ENCODE measurements at regions of chr14 and their contacts with region 1.

Region 1: DNA sequence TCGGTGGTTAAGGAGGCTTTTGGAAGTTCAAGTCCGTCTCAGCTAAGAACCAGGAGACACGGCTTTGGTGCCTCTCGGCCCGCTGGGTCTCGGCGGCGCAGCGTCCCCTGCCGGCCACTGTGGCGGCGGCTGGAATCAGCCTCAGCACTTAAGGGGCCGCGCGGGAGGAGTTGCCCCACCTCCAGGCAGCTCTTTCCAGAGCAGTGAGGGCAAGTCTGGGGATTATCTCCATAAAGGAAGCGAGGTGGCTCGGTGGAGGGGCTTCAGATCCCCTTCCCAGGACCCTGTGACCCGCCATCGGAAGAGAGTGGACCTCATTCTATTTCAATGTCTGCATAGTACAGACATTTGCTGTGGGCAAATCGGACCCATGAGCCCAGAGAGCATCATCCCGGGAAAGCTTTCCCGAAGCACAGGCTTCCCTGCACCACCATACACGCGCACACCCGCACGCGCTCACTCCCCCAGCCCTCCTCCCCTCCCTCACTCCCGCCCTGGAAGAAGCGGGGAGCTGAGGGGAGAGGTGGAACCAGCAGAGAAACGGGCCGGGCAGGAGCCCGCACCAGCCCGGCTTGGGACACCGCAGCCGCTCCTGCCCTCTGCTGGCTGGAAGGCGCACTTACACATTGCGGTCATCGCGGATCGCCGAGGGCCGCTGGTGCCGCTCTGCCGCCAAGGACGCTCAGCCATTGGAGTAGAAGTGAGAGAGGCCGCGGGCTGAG is 15.9 kb downstream of the RNASE2 start:
- DNase-seq: peak; percentile 86
- H3K4me3 ChIP-seq: peak overlapping the region; percentile 15 to 64 (median 55)
- H3K27ac ChIP-seq: peak overlapping the region; percentile 8
- H3K4me1 ChIP-seq: peaks cover 21% of the 10 kb centered on the region
- H3K27me3 ChIP-seq: peaks cover 8 to 14% of the 10 kb centered on the region in 2 experiments
- CTCF ChIP-seq: peak; percentile 98 to 99
- POLR2A ChIP-seq: no peak

Region 2: DNA sequence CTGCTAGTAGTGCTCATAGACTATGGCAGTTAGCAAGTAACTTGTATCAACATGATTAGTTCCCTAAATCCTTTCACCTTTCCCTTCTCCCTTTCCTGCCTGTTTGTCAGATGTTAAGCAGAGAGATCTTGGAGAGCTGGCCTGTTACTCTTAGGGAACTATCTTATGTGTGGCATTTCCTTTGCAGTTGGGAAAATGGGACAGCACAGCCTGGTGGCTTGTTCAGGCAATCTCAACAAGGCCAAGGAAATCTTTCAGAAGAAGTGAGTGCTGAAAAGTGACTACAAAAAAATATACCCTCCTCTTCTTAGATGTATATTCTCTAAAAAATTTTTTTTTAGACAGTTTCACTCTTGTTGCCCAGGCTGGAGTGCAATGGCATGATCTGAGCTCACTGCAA is 620.3 kb before region 1 on chr14:
- CTCF ChIA-PET with region 1: no interaction called
- POLR2A ChIA-PET with region 1: no interaction called
- dilution Hi-C with region 1: no loop called
- intact Hi-C with region 1: no loop called
- DNase-seq: peak; percentile 15
- H3K4me3 ChIP-seq: no peak overlapping the region
- H3K27ac ChIP-seq: no peak overlapping the region
- H3K4me1 ChIP-seq: peaks cover 12% of the 10 kb centered on the region
- H3K27me3 ChIP-seq: no peaks in the 10 kb centered on the region
- CTCF ChIP-seq: peak; percentile 15 to 22
- POLR2A ChIP-seq: no peak

Region 3: GRCh38 chr14:20613094-20614037 is 357.8 kb before region 1 on chr14:
- CTCF ChIA-PET with region 1: no interaction called
- POLR2A ChIA-PET with region 1: no interaction called
- dilution Hi-C with region 1: no loop called
- intact Hi-C with region 1: loop called (anchors 5 kb)
- DNase-seq: peak; percentile 97
- H3K4me3 ChIP-seq: peak overlapping the region; percentile 48 to 86 (median 70)
- H3K27ac ChIP-seq: peak overlapping the region; percentile 27
- H3K4me1 ChIP-seq: peaks cover 11% of the 10 kb centered on the region
- H3K27me3 ChIP-seq: peaks cover 3 to 6% of the 10 kb centered on the region in 2 experiments
- CTCF ChIP-seq: peak; percentile 55 to 65
- POLR2A ChIP-seq: no peak

Region 4: GRCh38 chr14:20697273-20698017 is 273.7 kb before region 1 on chr14:
- CTCF ChIA-PET with region 1: interaction called, 14 read pairs
- POLR2A ChIA-PET with region 1: no interaction called
- dilution Hi-C with region 1: no loop called
- intact Hi-C with region 1: loop called (anchors 2 kb)
- DNase-seq: peak; percentile 89
- H3K4me3 ChIP-seq: no peak overlapping the region
- H3K27ac ChIP-seq: peak overlapping the region; percentile 30
- H3K4me1 ChIP-seq: peaks cover 11% of the 10 kb centered on the region
- H3K27me3 ChIP-seq: no peaks in the 10 kb centered on the region
- CTCF ChIP-seq: peak; percentile 73 to 90
- POLR2A ChIP-seq: no peak

Region 5: DNA sequence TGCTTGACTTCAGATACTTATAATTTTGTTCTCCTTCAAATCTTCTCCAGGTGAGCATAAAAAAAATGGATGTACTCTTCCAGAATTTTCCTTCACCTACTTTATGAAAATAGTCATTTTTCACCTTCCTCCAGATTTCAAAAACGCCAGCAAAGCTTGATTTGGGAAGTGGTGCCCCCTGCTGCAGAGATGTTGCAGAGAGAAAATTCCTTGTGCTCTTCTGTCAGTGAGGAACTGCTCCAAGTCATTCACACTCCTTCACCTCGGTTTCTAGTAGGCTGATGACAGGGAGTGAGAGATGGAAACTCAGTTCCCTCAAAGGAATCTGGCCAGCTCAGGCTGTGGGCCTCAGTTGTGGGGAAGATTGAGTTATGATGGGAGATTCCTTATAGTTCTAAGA is 104.2 kb before region 1 on chr14:
- CTCF ChIA-PET with region 1: interaction called, 17 read pairs
- POLR2A ChIA-PET with region 1: no interaction called
- dilution Hi-C with region 1: no loop called
- intact Hi-C with region 1: loop called (anchors 2 kb)
- DNase-seq: peak; percentile 24
- H3K4me3 ChIP-seq: no peak overlapping the region
- H3K27ac ChIP-seq: no peak overlapping the region
- H3K4me1 ChIP-seq: no peaks in the 10 kb centered on the region
- H3K27me3 ChIP-seq: peaks cover 7 to 22% of the 10 kb centered on the region in 2 experiments
- CTCF ChIP-seq: peak; percentile 31 to 51
- POLR2A ChIP-seq: no peak

Region 6: GRCh38 chr14:20956376-20956976 is 14.7 kb before region 1 on chr14:
- CTCF ChIA-PET with region 1: interaction called, 48 read pairs
- POLR2A ChIA-PET with region 1: no interaction called
- dilution Hi-C with region 1: no loop called
- intact Hi-C with region 1: no loop called
- DNase-seq: no peak
- H3K4me3 ChIP-seq: no peak overlapping the region
- H3K27ac ChIP-seq: no peak overlapping the region
- H3K4me1 ChIP-seq: no peaks in the 10 kb centered on the region
- H3K27me3 ChIP-seq: peaks cover 2 to 5% of the 10 kb centered on the region in 2 experiments
- CTCF ChIP-seq: no peak
- POLR2A ChIP-seq: no peak

Region 7: GRCh38 chr14:20989572-20990551 is 18.7 kb after region 1 on chr14 and contains the start of gene METTL17:
- CTCF ChIA-PET with region 1: interaction called, 34 read pairs
- POLR2A ChIA-PET with region 1: no interaction called
- dilution Hi-C with region 1: no loop called
- intact Hi-C with region 1: loop called (anchors 2 kb)
- DNase-seq: peak; percentile 94
- H3K4me3 ChIP-seq: peak within 1 kb of the TSS; percentile 73 to 97 (median 96)
- H3K27ac ChIP-seq: peak within 1 kb of the TSS; percentile 58
- H3K4me1 ChIP-seq: peaks cover 21% of the 10 kb centered on the region
- H3K27me3 ChIP-seq: no peaks in the 10 kb centered on the region
- CTCF ChIP-seq: peak; percentile 29 to 40
- POLR2A ChIP-seq: peak; percentile 54
- total RNA-seq, gene METTL17: 50.2 and 60.6 TPM in 2 replicates

Region 8: DNA sequence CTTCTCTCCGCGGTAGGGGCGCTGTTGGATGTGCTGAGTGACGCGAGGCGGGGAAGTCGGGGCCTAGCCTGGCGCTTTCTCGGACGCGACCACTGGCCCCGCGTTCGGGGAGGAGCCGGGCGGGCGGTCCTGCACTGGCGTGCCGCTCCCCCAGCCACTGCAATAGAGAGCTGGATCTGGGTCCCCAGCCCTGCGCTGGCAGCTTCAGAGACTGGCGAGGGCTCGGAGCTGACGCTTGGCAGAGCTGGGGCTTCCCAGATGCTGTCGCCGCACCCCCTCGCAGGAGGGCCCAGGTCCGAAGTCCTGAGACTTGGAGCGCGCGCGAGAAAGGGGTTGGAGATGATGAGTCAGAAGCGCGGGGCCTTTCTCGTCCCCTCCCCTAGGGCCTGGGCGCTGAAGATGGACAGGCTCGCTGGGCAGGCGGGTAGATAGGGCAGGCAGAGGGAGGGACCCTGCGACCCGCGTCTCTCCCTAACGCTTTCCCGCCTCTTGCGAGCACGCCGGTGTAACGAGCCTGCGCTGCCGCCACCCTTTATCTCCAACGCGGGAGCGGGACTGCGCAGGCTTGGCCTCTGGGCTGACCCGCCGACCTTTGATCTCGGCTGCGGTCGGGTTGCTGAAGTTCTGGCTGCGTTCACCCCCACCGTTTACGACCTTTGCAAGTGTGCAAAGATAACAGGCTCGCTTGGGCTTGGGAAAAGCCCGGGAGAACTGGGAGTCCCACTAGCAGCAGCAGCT is 132.7 kb after region 1 on chr14:
- CTCF ChIA-PET with region 1: interaction called, 4 read pairs
- POLR2A ChIA-PET with region 1: no interaction called
- dilution Hi-C with region 1: no loop called
- intact Hi-C with region 1: loop called (anchors 5 kb)
- DNase-seq: peak; percentile 94
- H3K4me3 ChIP-seq: peak overlapping the region in 2 of 3 experiments; percentile 47 to 60
- H3K27ac ChIP-seq: peak overlapping the region; percentile 93
- H3K4me1 ChIP-seq: peaks cover 20% of the 10 kb centered on the region
- H3K27me3 ChIP-seq: peaks cover 12 to 18% of the 10 kb centered on the region in 2 experiments
- CTCF ChIP-seq: peak; percentile 82 to 85
- POLR2A ChIP-seq: peak; percentile 77

Region 9: DNA sequence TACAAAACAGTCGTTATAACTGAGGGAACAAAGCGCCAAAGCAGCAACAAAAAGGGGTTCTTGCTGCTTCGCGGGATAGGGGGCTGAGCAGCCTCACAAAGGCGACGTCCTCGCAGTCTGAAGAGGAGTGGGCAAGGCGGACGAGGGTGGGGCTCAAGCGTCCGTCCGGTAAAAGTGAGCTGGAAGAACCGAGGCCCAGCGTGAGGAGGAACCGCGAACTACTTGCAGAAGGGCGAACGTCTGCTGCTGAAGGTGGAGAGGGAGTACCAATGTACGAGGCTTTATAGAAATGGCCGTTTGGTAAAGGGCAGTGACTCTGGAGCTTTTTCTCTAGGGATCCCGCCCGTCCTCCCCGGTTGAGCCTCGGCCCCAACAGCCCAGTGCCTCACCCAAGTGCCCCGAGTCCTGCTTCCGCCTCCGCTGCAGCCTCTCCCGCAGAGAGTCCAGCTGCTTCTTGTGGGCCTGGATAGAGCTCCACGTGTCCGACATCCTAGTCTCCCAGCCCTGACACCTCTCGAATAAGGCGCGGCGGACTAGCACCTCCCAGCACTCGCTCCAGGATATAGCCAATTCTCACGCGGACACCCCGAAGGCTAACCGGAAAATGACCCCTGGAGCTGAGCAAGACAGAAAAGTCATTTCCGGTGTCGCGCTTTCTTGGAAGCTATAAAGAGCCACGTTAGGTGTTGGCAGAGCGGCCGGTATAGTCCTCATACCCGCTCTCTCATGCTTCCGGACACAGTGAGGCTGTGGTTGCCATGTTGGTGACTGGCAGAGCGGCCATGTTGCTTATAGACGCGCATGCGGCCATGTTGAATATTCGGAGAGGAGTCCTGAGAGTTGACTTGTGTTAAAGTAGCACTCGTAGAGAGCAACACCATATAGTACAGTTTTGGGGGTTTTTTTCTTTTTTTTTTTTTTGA is 539.9 kb after region 1 on chr14 and contains the start of gene METTL3:
- CTCF ChIA-PET with region 1: no interaction called
- POLR2A ChIA-PET with region 1: no interaction called
- dilution Hi-C with region 1: no loop called
- intact Hi-C with region 1: no loop called
- DNase-seq: peak; percentile 99
- H3K4me3 ChIP-seq: peak within 1 kb of the TSS; percentile 75 to 91 (median 84)
- H3K27ac ChIP-seq: peak within 1 kb of the TSS; percentile 71
- H3K4me1 ChIP-seq: peaks cover 11% of the 10 kb centered on the region
- H3K27me3 ChIP-seq: peaks cover 2 to 12% of the 10 kb centered on the region in 2 experiments
- CTCF ChIP-seq: no peak
- POLR2A ChIP-seq: peak; percentile 73
- total RNA-seq, gene METTL3: 63.1 and 65.0 TPM in 2 replicates

Region 10: DNA sequence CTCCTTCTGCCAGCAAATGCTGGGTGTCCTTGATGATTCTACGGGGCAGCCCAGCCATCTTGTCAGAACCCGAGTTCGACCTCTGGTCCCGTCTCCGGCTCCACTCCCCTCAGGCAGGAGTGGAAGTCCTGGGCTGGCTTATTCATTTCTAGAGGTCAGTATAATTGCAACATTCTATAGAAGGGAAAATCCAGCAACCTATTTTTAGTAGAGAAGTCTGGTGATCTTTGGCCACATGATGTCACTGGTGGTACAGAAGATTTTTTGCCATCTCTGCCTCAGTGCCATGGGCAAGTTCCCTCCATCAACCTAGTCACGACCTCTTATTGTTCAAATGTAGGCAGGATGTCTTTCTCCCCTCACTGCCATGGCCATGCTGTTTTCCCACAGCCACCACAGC is 641.2 kb after region 1 on chr14:
- CTCF ChIA-PET with region 1: no interaction called
- POLR2A ChIA-PET with region 1: no interaction called
- dilution Hi-C with region 1: no loop called
- intact Hi-C with region 1: no loop called
- DNase-seq: no peak
- H3K4me3 ChIP-seq: no peak overlapping the region
- H3K27ac ChIP-seq: no peak overlapping the region
- H3K4me1 ChIP-seq: no peaks in the 10 kb centered on the region
- H3K27me3 ChIP-seq: no peaks in the 10 kb centered on the region
- CTCF ChIP-seq: no peak
- POLR2A ChIP-seq: no peak